Cardiac septum (tissue), 1 donor: ENCODE measurements at regions of chr15 and their contacts with region 1.

Region 1: GRCh38 chr15:70097337-70098169 is at the start of gene TLE3:
- DNase-seq: peak; percentile 99
- total RNA-seq, gene TLE3: 32.6 TPM

Region 2: GRCh38 chr15:69593981-69594966 is 503.3 kb before region 1 on chr15:
- intact Hi-C with region 1: loop called (anchors 5 kb)
- DNase-seq: no peak

Region 3: DNA sequence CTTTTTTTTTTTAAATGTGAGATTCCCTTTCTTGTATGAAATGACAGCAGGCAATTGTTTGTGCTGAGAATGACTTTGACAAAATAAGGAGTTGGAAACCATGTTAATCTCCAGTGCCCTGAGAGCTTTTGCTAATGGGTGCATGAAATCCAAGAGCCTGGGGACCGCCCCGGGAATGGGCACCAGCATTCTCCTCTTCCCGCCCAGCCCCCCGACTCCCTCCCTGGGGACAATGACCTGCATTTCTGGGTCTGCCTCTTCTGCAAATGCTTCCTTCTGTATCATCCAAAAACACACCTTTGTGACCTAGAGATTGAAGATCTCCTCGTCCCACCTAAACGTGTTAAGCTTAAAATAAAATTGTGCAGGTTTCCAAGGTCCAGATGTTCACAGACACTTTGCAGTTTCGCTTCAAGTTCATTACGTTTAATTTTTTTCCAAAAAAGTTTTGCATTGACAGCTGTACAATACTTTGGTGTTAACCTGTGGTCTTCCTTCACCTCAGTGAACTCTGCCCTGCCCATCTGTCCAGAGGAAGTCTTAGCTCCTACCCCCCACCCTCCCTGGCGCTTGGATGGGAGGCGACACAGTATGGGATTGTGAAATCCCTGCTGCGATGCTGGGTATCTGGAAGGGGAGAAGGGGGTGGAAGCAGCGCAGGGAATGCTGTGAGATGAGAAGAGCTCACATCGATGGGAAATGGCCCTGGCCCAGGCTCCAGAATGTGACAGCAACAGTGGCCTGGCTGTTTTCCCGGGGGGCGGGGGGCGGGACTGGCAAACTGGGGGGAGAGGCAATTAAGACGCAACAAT is 50.0 kb before region 1 on chr15:
- intact Hi-C with region 1: no loop called
- DNase-seq: peak; percentile 67

Region 4: GRCh38 chr15:70111203-70112073 is 13.9 kb after region 1 on chr15:
- intact Hi-C with region 1: loop called (anchors 1 kb)
- DNase-seq: peak; percentile 88

Region 5: GRCh38 chr15:70140543-70141375 is 43.2 kb after region 1 on chr15:
- intact Hi-C with region 1: loop called (anchors 5 kb)
- DNase-seq: no peak

Region 6: DNA sequence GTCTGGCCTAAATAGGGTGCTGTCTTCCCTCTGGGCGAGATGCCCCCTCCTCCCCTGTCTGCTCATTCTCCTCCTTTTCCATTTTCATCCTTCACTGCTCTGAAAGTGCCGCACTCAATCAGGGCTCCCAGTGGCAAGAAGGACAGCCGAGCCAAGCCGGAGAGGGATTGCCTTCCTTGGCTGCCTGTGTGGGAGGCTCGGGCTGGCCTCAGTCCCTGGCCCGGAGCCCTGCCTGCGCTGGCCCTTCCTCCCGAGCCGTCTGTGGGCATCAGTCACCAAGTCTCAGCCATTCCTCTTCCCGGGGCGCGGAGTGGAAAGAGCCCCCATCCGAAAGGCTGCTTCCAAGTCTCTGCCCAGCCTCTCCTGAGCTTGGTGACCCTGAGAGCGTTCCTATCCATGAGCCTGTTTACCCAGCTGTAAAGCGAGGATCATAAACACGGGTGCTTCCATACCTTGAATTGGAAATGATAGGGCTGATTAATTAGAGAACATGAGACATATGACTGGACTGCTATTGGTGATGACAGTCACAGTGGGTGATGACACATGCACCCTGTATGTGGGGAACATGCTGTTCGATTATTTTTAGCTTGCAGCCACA is 59.2 kb after region 1 on chr15:
- intact Hi-C with region 1: loop called (anchors 2 kb)
- DNase-seq: peak; percentile 77

Region 7: GRCh38 chr15:70210528-70210927 is 113.0 kb after region 1 on chr15:
- intact Hi-C with region 1: no loop called
- DNase-seq: no peak

Region 8: DNA sequence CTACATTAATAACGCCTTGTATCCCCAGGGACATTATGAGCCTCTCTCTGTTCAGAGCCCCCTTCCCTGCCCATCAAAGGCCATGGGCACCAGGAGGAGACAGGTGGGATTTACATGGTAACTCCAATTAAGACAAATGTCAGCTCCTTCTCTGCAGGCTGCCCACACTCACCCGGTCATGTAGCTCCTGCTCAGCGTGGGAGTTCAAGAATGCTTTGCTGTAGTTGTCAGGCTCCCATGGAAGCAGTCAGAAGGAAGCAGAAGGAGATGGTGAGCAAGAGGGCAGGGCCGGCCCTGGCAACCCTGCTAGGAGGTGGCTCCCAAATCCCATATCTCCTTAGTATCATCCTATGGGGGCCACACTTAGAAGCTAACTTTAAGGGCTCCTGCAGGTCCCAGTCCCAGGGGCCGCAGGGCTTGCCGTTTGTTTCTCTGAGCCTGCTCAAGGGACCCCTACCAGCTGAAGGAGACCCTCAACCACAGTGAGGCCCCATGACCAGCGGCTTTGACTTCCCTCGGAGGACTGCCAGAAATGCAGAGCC is 218.6 kb after region 1 on chr15:
- intact Hi-C with region 1: no loop called
- DNase-seq: no peak

Region 9: GRCh38 chr15:70362886-70363285 is 265.3 kb after region 1 on chr15:
- intact Hi-C with region 1: loop called (anchors 5 kb)
- DNase-seq: peak; percentile 72

Region 10: DNA sequence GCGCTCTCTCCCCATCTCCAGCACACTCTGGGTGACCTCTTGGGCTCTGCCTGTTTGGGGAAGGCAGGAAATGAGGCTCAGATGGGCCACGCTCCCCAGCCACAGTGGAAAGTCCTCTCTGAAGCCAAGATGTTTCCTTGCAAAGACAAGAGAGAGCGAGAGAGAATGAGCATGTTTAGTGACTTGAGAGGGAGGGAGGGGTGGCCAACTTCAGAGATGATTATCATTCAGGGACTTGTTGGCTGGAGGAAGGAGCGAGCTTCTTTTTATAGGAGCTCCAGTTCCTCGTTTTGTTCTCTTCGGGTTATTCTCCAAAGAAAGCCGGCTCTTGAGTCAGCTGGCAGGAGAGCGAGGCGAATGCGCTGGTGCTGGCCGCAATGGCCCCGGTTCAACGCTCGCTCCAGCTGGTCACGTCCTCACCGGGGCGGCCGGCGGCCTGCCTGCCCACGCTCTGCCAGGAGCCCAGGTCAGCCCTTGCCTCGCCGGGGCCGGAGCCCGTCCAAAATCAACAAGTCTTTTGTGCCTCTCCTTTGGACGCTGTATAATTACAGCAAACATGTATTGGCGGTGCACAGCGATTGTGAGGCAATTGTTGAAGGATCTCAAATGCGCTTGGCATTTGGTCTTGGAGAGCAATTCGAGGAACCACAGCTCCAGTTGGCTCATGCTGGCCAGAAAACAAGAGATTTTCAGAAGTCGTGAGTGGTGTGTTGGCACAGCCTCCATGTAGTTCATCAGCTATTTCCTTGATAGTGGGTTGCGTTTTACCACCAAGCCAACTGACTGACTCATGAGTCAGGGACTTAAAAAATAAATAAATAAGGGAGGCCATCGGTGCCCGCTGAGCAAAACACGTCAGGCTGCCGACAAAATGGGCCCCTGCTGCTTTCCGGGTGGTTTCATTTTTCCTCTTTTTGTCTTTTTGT is 377.2 kb after region 1 on chr15:
- intact Hi-C with region 1: loop called (anchors 10 kb)
- DNase-seq: peak; percentile 88